ENCODE measurements at regions of chr12 and their contacts with region 1.

Region 1: DNA sequence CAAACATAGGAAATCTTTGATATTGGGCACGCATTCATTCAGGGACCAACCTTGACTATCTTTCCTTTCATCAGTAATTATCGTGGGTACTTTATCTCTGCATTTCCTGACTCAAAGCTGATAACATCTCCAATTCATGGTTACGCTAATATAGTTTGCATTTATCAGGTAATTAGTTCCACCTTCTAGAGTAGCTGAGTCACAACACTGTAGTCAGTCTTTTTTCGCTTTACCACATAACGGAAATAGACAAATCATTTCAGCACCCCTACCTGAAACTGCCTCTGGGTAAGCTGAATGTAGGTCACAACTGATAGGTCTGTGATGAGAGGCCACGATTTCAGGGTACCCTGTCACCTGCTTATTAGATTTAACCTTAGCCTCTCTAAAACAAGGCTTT is 36.7 kb upstream of the IL22 start:
- DNase-seq: peak; percentile 65
- H3K4me3 Mint-ChIP-seq: no peak overlapping the region
- H3K27ac Mint-ChIP-seq: no peak overlapping the region
- H3K4me1 Mint-ChIP-seq: peaks cover 41% of the 10 kb centered on the region
- H3K27me3 Mint-ChIP-seq: peaks cover 12% of the 10 kb centered on the region

Region 2: DNA sequence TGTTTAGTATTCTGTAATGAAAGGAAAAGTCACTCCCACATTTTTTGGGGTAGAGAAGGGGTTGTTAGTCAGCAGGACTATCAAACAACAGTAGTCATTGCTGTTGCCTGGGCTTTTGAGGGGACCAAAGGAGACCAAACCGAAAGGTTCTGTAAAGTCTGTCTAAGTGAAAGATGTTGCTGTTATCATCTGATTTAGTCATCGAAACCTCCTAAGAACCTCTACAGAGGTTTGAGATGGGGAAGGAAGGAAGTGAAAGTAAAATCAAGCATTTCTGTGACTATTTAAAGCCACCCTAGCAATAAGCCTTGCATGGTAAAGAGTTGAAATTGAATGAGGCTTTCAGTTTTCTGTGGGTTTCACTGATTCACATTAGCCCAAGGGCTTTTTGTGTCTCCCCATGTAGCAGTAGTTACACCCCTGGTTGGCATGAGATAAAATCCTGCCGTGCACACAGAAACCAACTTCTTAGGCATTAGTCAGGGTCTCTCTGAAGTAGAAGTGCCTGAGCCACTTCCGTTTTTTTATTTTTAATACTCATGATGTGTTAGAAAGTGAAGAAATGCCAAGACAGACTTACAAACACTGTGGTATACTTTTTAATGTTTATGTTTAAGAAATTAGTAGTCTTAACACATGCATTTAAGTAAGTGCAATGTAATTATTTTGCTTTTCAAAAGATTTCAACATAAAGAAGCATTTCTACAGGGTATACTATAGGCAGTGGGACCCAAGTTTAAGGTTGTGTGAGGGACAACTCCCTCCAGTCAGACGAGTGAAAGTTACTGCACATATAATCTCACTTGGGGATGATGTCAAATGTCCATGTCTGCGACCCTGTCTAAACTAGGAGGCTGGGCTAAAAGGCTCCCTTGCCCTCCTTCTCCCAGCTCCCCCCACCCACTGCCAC is 591.2 kb before region 1 on chr12:
- CTCF ChIA-PET with region 1: no interaction called
- intact Hi-C with region 1: loop called (anchors 5 kb)
- DNase-seq: peak; percentile 74
- H3K4me3 Mint-ChIP-seq: peak overlapping the region; percentile 28
- H3K27ac Mint-ChIP-seq: peak overlapping the region; percentile 64
- H3K4me1 Mint-ChIP-seq: peaks cover 51% of the 10 kb centered on the region
- H3K27me3 Mint-ChIP-seq: no peaks in the 10 kb centered on the region

Region 3: DNA sequence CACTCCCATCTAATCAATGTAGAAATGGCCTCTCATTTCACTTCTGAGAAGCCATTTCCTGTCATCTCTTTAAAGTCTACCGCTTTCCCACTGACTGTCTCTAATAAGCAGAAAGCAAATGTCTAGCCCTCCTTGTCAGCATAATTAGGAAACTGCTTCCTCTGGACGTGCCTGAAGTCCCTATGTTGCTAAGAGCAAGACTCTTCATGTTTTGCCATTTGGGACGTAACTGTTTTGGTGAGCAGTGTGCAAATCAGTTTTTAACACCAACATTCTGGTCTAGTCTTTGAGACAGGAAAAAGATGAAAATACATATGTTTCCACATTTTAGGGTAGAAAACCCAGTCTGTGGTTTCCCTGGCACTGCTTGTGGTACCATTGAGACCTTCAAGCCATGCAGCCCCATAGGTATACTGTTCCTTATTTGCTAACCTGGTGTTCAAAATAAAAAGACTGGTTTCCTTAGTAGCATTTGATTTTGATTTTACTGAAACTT is 152.7 kb before region 1 on chr12:
- CTCF ChIA-PET with region 1: no interaction called
- intact Hi-C with region 1: loop called (anchors 2 kb)
- DNase-seq: peak; percentile 38
- H3K4me3 Mint-ChIP-seq: no peak overlapping the region
- H3K27ac Mint-ChIP-seq: peak overlapping the region; percentile 91
- H3K4me1 Mint-ChIP-seq: peaks cover 52% of the 10 kb centered on the region
- H3K27me3 Mint-ChIP-seq: no peaks in the 10 kb centered on the region

Region 4: GRCh38 chr12:68259318-68259940 is 30.7 kb before region 1 on chr12:
- CTCF ChIA-PET with region 1: interaction called, 3 read pairs
- intact Hi-C with region 1: loop called (anchors 1 kb)
- DNase-seq: peak; percentile 50
- H3K4me3 Mint-ChIP-seq: no peak overlapping the region
- H3K27ac Mint-ChIP-seq: peak overlapping the region; percentile 72
- H3K4me1 Mint-ChIP-seq: peaks cover 24% of the 10 kb centered on the region
- H3K27me3 Mint-ChIP-seq: peaks cover 16% of the 10 kb centered on the region

Region 5: GRCh38 chr12:68364893-68365725 is 75.0 kb after region 1 on chr12:
- CTCF ChIA-PET with region 1: no interaction called
- intact Hi-C with region 1: loop called (anchors 2 kb)
- DNase-seq: peak; percentile 90
- H3K4me3 Mint-ChIP-seq: peak overlapping the region; percentile 79
- H3K27ac Mint-ChIP-seq: peak overlapping the region; percentile 90
- H3K4me1 Mint-ChIP-seq: peaks cover 57% of the 10 kb centered on the region
- H3K27me3 Mint-ChIP-seq: no peaks in the 10 kb centered on the region

Region 6: DNA sequence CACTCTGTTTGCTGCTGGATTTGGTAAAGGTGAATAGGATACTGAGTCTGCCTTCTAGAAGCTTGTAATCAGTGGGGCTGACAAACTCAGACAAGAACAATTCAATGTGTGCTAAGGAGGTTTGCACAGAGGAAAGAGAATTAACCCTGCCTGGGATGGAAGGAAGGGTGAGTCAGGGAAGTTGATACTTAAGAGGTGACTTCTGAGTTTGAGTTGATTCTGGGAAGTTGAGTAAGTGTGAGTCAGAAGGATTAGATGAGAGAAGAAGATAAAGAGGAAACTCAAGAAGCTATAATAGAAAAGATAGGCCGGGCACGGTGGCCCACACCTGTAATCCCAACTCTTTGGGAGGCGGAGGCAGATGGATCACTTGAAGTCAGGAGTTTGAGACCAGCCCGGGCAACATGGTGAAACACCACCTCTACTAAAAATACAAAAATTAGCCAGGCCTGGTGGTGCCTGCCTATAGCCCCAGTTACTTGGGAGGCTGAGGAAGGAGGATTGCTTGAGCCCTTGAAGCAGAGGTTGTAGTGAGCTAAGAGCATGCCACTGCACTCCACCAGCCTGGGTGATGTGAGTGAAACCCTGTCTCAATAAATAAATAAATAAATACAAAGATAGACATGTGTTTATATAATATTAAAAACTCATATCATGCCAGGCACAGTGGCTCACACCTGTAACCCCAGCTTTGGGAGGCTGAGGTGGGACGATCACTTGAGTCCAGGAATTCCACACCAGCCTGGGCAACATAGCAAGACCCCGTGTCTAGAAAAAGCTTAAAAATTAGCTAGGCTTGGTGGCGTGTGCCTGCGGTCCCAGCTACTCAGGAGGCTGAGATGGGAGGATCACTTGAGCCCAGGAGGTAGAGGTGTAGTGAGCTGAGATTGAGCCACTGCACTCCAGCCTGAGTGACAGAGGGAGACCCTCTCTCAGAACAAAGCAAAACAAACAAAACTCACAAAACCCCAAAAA is 769.6 kb after region 1 on chr12:
- CTCF ChIA-PET with region 1: no interaction called
- intact Hi-C with region 1: loop called (anchors 2 kb)
- DNase-seq: peak; percentile 37
- H3K4me3 Mint-ChIP-seq: no peak overlapping the region
- H3K27ac Mint-ChIP-seq: peak overlapping the region; percentile 81
- H3K4me1 Mint-ChIP-seq: peaks cover 49% of the 10 kb centered on the region
- H3K27me3 Mint-ChIP-seq: no peaks in the 10 kb centered on the region

Measured in activated naive CD4-positive, alpha-beta T cell treated with anti-CD3 and anti-CD28 coated beads for 36 hours (primary cell).